ENCODE measurements at regions of chr13 and their contacts with region 1.

Region 1: DNA sequence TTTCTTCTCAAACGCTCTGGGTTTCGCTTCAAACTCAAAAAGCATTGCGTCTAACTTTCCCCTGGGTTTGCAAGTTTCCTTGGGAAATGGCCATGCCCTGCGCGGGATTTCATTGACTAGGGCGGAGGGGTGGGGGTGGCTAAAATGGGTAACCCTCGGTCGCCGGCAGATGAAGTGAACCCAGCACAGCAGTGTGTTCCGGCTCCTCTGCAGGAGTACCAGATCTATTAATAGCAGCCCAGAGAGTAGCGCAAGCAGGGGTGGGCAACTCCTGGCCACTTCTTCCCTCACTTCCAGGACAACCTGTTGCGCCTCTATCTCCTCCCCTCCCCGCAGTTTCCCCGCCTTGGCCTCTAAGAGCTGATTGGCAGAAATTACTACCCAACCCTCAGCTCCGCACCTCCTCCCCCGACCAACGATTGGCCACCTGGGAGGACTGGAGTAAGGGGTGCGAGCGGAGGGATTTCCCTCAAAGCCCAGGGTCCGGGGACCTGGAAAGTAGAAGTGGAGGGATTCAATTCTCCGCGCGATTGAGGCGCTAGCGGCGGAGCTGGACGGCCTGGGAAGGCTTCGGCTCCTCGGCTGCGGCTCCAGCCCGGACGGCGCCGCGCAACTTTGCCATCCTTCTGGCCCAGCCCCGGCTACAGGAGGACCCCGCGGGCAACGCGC is at the start of gene FREM2:
- DNase-seq: peak; percentile 93 to 94
- H3K4me3 ChIP-seq: peak within 1 kb of the TSS; percentile 82
- H3K4me3 Mint-ChIP-seq: peak within 1 kb of the TSS; percentile 92
- H3K27ac Mint-ChIP-seq: peak within 1 kb of the TSS; percentile 50
- H3K4me1 ChIP-seq: peaks cover 25% of the 10 kb centered on the region
- H3K4me1 Mint-ChIP-seq: peaks cover 6% of the 10 kb centered on the region
- H3K27me3 ChIP-seq: no peaks in the 10 kb centered on the region
- H3K27me3 Mint-ChIP-seq: no peaks in the 10 kb centered on the region
- CTCF ChIP-seq: no peak
- total RNA-seq, gene FREM2: 35.5 and 42.6 TPM in 2 replicates

Region 2: GRCh38 chr13:38477676-38478075 is 209.0 kb before region 1 on chr13:
- CTCF ChIA-PET with region 1: no interaction called
- POLR2A ChIA-PET with region 1: no interaction called
- intact Hi-C with region 1: no loop called
- DNase-seq: no peak
- H3K4me3 ChIP-seq: no peak overlapping the region
- H3K4me3 Mint-ChIP-seq: no peak overlapping the region
- H3K27ac Mint-ChIP-seq: no peak overlapping the region
- H3K4me1 ChIP-seq: no peaks in the 10 kb centered on the region
- H3K4me1 Mint-ChIP-seq: no peaks in the 10 kb centered on the region
- H3K27me3 ChIP-seq: no peaks in the 10 kb centered on the region
- H3K27me3 Mint-ChIP-seq: no peaks in the 10 kb centered on the region
- CTCF ChIP-seq: no peak

Region 3: GRCh38 chr13:38697628-38698333 is 11.1 kb after region 1 on chr13:
- CTCF ChIA-PET with region 1: interaction called, 3 read pairs
- POLR2A ChIA-PET with region 1: interaction called, 8 read pairs
- intact Hi-C with region 1: loop called (anchors 1 kb)
- DNase-seq: peak in 1 of 2 experiments; percentile 32
- H3K4me3 ChIP-seq: no peak overlapping the region
- H3K4me3 Mint-ChIP-seq: no peak overlapping the region
- H3K27ac Mint-ChIP-seq: no peak overlapping the region
- H3K4me1 ChIP-seq: peaks cover 10% of the 10 kb centered on the region
- H3K4me1 Mint-ChIP-seq: peaks cover 11% of the 10 kb centered on the region
- H3K27me3 ChIP-seq: no peaks in the 10 kb centered on the region
- H3K27me3 Mint-ChIP-seq: no peaks in the 10 kb centered on the region
- CTCF ChIP-seq: no peak

Region 4: GRCh38 chr13:38763439-38764381 is 77.0 kb after region 1 on chr13:
- CTCF ChIA-PET with region 1: interaction called, 20 read pairs
- POLR2A ChIA-PET with region 1: interaction called, 11 read pairs
- intact Hi-C with region 1: loop called (anchors 1 kb)
- DNase-seq: peak; percentile 57 to 70
- H3K4me3 ChIP-seq: 0 out of 2 replicates have a peak overlapping the region, but pooled peaks have one; percentile 9
- H3K4me3 Mint-ChIP-seq: peak overlapping the region; percentile 64
- H3K27ac Mint-ChIP-seq: peak overlapping the region; percentile 29
- H3K4me1 ChIP-seq: peaks cover 17% of the 10 kb centered on the region
- H3K4me1 Mint-ChIP-seq: peaks cover 29% of the 10 kb centered on the region
- H3K27me3 ChIP-seq: no peaks in the 10 kb centered on the region
- H3K27me3 Mint-ChIP-seq: no peaks in the 10 kb centered on the region
- CTCF ChIP-seq: peak; percentile 72 to 76

Region 5: DNA sequence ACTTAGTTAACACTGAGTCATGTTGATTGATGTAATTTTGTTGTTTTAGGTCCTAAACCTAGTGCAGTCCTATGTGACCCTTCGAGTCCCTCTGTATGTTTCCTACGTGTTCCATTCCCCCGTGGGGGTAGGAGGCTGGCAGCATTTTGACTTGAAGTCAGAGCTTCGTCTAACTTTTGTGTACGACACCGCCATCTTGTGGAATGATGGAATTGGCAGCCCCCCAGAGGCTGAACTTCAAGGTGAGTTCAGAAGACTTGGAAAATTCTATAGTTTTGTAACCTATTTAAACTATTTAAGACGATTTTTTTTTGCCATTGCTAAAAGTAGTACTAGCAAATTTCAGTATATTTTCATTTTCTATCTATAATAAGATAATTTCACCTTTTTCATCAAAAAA is 186.0 kb after region 1 on chr13:
- CTCF ChIA-PET with region 1: interaction called, 18 read pairs
- POLR2A ChIA-PET with region 1: no interaction called
- intact Hi-C with region 1: loop called (anchors 1 kb)
- DNase-seq: peak; percentile 67
- H3K4me3 ChIP-seq: no peak overlapping the region
- H3K4me3 Mint-ChIP-seq: no peak overlapping the region
- H3K27ac Mint-ChIP-seq: no peak overlapping the region
- H3K4me1 ChIP-seq: peaks cover 14% of the 10 kb centered on the region; the same call in 1 of the 2 replicates
- H3K4me1 Mint-ChIP-seq: peaks cover 12% of the 10 kb centered on the region
- H3K27me3 ChIP-seq: no peaks in the 10 kb centered on the region
- H3K27me3 Mint-ChIP-seq: no peaks in the 10 kb centered on the region
- CTCF ChIP-seq: peak; percentile 69 to 84

Region 6: GRCh38 chr13:39023790-39024189 is 337.1 kb after region 1 on chr13:
- CTCF ChIA-PET with region 1: no interaction called
- POLR2A ChIA-PET with region 1: no interaction called
- intact Hi-C with region 1: loop called (anchors 5 kb)
- DNase-seq: peak; percentile 83 to 87
- H3K4me3 ChIP-seq: no peak overlapping the region
- H3K4me3 Mint-ChIP-seq: peak overlapping the region; percentile 34
- H3K27ac Mint-ChIP-seq: peak overlapping the region; percentile 82
- H3K4me1 ChIP-seq: peaks cover 35% of the 10 kb centered on the region
- H3K4me1 Mint-ChIP-seq: peaks cover 26% of the 10 kb centered on the region
- H3K27me3 ChIP-seq: no peaks in the 10 kb centered on the region
- H3K27me3 Mint-ChIP-seq: no peaks in the 10 kb centered on the region
- CTCF ChIP-seq: no peak

Measured in Caco-2 (cell line).